ENCODE measurements at regions of chr21 and their contacts with region 1.

Region 1: GRCh38 chr21:25895565-25896205 is 160.9 kb downstream of the GABPA start:
- DNase-seq: peak in 1 of 2 donors; percentile 47
- ATAC-seq: peak; percentile 84
- H3K4me3 ChIP-seq: no peak overlapping the region
- H3K27ac ChIP-seq: no peak overlapping the region
- H3K4me1 ChIP-seq: no peaks in the 10 kb centered on the region
- H3K27me3 ChIP-seq: no peaks in the 10 kb centered on the region

Region 2: DNA sequence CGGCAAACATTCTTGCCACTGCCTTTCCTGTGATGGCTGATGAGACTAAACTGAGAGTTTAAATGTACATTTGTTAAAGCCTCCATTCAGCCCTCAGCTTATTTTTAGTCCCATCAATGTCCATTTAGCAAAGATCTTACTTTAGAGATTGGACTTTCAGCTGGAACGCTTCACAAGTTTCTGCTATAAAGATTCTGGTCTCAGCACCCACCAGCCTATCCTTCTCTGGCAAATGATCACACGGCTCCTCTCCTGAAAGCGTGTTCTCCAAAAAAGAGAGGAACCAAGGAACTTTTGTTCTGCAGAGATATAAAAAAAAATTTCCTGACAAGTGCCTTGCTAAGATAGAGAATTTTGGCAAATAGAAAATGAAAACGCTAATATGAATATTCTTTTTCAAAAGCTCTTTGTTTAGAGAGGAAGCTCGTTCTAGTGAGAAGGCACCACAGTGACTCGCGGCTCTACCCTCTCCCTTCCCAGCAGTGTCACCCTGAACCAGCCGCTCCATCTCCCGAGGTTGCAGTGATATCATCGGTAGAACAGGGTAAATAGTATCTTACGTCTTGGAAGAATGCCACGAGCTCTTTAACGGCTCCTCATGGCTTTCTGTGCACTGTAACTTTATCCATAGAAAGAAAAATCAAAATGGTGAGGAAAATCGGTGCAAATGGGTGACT is 74.7 kb after region 1 on chr21:
- intact Hi-C with region 1: loop called in 1 of 2 experiments (anchors 10 kb)
- DNase-seq: no peak
- ATAC-seq: no peak
- H3K4me3 ChIP-seq: no peak overlapping the region
- H3K27ac ChIP-seq: no peak overlapping the region
- H3K4me1 ChIP-seq: no peaks in the 10 kb centered on the region
- H3K27me3 ChIP-seq: no peaks in the 10 kb centered on the region

Region 3: GRCh38 chr21:26170471-26171257 is 275.0 kb after region 1 on chr21 and contains the start of gene APP:
- intact Hi-C with region 1: loop called in 1 of 2 experiments (anchors 5 kb)
- DNase-seq: peak; percentile 91 to 95
- ATAC-seq: peak; percentile 94
- H3K4me3 ChIP-seq: peak within 1 kb of the TSS; percentile 93 to 95
- H3K27ac ChIP-seq: peak within 1 kb of the TSS; percentile 15 to 66
- H3K4me1 ChIP-seq: no peaks in the 10 kb centered on the region
- H3K27me3 ChIP-seq: no peaks in the 10 kb centered on the region
- total RNA-seq, gene APP: 507 to 581 TPM